IMR-90 (cell line): ENCODE measurements at regions of chr4 and their contacts with region 1.

Region 1: DNA sequence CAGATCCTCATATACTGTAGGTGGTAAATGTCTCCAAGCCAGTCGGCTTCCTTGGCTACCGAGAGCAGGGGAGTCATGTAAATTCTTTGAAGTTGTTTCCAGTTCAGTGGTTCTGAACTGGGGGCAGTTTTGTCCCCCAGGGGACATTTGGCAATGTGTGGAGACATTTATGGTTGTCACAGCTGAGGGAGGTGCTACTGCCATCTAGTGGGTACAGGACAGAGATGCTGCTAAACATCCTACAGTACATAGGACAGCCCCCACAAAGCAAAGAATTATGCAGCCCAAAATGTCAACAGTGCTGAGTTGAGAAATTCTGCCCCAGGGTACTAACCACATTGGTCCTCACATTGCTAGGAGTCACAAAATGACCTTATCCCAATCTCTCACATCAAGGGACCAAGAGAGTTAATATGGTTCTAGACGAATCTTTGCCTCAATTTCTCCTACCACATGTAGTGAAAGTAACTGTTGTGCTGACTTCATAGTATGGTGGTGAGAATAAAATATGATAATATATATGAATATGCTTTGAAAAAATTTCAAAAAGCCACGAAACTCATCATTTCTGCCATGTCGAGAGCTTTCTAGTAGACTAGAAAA is 104.4 kb upstream of the ARHGAP24 start:
- DNase-seq: peak; percentile 18
- ATAC-seq: peak; percentile 87
- H3K4me3 ChIP-seq: no peak overlapping the region
- H3K27ac ChIP-seq: no peak overlapping the region
- H3K4me1 ChIP-seq: no peaks in the 10 kb centered on the region
- H3K27me3 ChIP-seq: no peaks in the 10 kb centered on the region; the same call in 1 of the 2 replicates
- CTCF ChIP-seq: peak; percentile 57
- POLR2A ChIP-seq: no peak
- RAD21 ChIP-seq: peak; percentile 43

Region 2: DNA sequence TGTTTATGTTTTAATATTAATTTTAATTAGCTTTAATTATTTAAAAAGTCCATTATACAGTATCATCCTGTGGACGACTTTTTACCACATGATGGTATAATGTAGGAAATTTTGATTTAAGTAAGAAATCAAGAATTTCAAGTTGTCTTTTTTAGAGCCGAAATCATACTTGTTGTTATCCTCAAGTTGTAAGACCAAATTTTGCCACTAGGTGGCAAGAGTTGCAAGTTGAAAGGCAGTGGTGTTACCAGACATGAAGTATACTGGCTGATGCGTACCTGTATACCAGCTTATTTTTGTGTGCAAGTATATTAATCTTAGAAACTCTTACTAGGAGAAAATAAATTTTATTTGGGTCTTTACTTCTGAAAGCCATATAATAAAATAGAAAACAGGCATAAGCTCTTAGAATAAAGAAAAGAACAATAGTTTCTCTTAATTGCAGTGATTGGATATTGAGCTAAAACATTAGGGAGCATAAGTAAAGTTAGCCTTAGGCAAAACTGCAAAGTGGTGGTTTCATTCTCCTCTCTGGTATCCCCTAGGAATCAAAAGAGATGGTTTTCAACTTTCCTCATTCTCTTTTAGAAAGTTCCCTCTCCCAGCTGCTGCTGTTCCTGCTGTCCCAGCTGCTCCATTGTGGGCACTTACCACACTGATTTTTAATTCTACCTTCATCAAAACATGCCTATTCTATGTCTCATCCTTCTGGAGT is 286.0 kb before region 1 on chr4:
- CTCF ChIA-PET with region 1: no interaction called
- POLR2A ChIA-PET with region 1: no interaction called
- dilution Hi-C with region 1: no loop called
- in situ Hi-C with region 1: no loop called
- intact Hi-C with region 1: loop called (anchors 1 kb)
- DNase-seq: peak; percentile 75
- ATAC-seq: peak; percentile 80
- H3K4me3 ChIP-seq: no peak overlapping the region
- H3K27ac ChIP-seq: no peak overlapping the region
- H3K4me1 ChIP-seq: no peaks in the 10 kb centered on the region
- H3K27me3 ChIP-seq: no peaks in the 10 kb centered on the region
- CTCF ChIP-seq: peak; percentile 70
- POLR2A ChIP-seq: no peak
- RAD21 ChIP-seq: peak; percentile 50

Region 3: DNA sequence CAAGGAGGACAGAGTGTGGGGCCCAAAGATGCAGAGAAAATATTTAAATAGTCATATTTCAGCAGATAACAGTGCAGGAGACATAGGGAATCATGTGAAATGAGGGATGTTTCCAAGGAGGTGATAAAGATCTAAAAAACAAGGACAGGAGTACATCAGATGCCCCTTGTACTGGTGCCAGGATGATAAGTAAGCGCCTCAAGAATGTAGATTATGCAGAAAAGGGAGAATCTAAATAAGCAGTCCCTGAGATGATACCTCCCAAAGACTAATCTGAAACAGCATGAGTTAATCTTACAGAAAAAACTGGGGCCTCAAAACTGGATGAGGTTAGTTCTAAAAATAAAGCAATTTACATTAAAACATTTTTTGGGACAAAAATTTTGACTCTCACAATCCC is 267.9 kb before region 1 on chr4:
- CTCF ChIA-PET with region 1: no interaction called
- POLR2A ChIA-PET with region 1: no interaction called
- dilution Hi-C with region 1: no loop called
- in situ Hi-C with region 1: no loop called
- intact Hi-C with region 1: no loop called
- DNase-seq: no peak
- ATAC-seq: no peak
- H3K4me3 ChIP-seq: no peak overlapping the region
- H3K27ac ChIP-seq: no peak overlapping the region
- H3K4me1 ChIP-seq: no peaks in the 10 kb centered on the region
- H3K27me3 ChIP-seq: no peaks in the 10 kb centered on the region
- CTCF ChIP-seq: no peak
- POLR2A ChIP-seq: no peak
- RAD21 ChIP-seq: no peak

Region 4: GRCh38 chr4:85522277-85522676 is 151.7 kb after region 1 on chr4:
- CTCF ChIA-PET with region 1: no interaction called
- POLR2A ChIA-PET with region 1: no interaction called
- dilution Hi-C with region 1: no loop called
- in situ Hi-C with region 1: no loop called
- intact Hi-C with region 1: no loop called
- DNase-seq: no peak
- ATAC-seq: no peak
- H3K4me3 ChIP-seq: no peak overlapping the region
- H3K27ac ChIP-seq: no peak overlapping the region
- H3K4me1 ChIP-seq: no peaks in the 10 kb centered on the region
- H3K27me3 ChIP-seq: no peaks in the 10 kb centered on the region
- CTCF ChIP-seq: no peak
- POLR2A ChIP-seq: no peak
- RAD21 ChIP-seq: no peak